Posterior cingulate gyrus (tissue), 11 donors: ENCODE measurements at regions of chr14 and their contacts with region 1.

Region 1: GRCh38 chr14:105168979-105169507 is 467 bp upstream of the JAG2 start:
- DNase-seq: peak in 2 of 10 donors; percentile 29 to 44

Region 2: DNA sequence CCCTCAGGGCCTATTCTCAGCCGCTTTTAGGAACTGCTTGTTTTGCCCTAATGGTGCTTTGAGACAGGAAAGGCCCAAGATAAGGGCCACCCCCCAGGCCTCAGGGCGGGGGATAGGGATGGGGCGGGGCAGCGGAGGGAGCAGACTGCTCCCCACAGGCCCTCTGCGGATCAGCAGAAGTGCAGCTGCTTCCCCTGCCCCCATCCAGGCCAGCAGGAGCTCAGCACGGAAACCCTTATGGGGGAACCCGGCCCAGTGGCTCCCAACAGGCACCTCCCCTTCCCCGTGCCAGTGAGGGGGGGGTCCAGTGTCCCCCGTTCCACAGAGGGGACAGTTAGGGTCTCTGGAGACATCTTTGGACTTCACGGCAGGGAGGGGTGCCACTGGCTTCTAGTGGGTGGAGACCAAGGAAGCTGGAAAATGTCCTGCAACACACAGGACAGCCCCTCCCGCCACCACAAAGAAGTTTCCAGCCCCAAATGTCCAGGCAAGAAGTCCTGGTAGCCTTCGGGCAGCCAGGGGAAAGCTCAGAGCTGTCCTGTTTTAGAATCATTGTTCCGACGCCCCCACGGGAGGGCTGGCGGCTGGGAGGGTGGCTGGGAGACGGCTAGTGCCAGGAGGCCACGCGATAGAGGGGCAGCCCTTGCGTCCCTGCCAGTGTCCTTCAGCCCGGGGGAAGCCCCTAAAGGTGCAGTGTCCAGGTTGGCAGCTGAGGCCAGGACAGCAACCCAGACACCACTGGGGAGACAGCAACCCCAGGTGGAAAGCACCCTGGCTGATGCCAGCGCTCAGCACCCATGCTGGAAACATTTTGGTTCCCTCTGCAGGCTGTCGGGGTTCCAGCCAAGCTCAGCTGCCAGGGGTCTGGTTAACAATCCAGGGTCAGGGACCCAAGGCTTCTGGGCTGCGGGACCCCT is 93.4 kb before region 1 on chr14:
- intact Hi-C with region 1: no loop called
- DNase-seq: peak in 3 of 10 donors; percentile 50 to 86 (median 73)

Region 3: DNA sequence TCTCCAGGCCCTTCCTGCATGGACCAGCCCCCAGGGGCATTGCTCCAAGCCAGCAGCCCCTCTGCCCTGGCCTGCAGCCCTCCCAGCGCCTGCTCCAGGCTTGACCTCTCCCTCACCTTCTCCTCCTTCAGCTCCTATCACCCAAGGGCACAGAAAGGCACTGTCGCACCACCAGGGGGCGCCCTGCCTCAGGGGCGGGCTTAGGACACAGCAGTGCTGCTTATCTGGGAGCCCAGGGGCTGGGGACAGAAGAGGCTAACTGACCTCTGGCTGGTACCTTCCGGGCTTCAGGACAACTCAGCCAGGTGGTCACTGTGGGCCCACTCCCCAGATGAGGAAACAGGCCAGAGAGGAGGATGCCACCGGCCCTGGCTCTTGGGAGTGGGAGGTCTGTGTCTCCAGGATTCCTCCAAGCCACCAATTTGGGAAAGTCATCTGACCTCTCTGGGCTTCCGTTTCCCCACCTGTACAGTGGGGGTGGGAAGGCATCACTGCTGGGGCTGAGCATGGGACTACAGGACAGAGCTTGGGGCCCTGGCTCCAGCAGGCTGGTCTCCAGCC is 78.5 kb before region 1 on chr14:
- intact Hi-C with region 1: loop called (anchors 5 kb)
- DNase-seq: peak; percentile 64 to 97 (median 82)

Region 4: GRCh38 chr14:105324080-105324778 is 155.2 kb after region 1 on chr14:
- intact Hi-C with region 1: no loop called
- DNase-seq: peak in 8 of 10 donors; percentile 56 to 95 (median 70)

Region 5: DNA sequence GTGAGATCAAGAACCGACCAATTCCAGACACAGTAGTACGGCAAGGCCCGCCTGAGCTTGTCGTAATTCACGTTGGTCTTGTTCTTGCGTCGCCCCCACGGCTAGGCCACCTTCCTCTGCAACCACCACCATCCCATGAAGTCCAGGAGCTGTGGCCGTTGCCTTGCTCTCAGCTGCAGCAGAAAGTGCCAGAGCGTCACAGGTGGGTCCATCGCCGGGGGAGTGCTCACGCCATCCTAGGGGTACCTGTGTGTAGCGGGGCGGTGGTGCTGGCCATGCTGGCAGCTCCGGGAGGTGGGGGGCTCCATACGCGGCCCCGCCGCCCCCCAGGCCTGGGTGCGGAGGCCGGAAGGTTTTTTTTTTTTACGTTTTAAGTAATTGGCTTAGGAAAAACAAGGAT is 380.4 kb after region 1 on chr14:
- intact Hi-C with region 1: no loop called
- DNase-seq: peak in 2 of 10 donors; percentile 55 to 71